ENCODE measurements at regions of chr15 and their contacts with region 1.

Region 1: DNA sequence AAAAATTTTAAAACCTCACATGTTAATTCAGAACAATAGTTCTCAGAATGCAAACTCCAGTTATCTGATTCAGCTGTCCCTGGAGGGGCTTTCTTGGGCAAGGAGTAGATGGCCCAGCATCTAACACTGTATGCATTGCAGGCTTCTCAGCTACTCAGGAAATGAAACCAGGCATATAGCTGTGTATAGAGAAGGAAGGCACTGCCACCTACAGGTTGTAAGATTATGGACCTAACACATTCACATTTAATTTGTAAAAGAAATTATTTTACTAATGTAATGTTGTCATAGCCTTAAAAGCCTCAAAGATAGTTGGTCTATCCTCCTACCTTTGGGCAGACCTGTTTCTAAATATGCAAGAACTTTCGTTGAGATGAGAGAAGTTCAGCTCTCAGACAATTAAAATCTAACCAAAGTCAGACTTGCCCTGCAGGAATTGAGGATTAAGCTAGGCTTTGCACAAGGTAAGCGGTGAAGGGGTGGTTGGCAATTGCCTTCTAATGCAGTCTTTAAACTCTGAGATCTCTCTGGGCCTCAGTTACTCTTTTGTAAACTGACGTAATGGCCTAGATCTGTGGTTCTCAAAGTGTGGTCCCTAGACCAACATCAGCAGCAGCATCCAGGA is 132.8 kb upstream of the SLC24A5 start:
- DNase-seq: peak in 2 of 9 donors; percentile 2 to 10
- ATAC-seq: peak; percentile 70
- H3K4me3 ChIP-seq: no peak overlapping the region
- H3K4me3 Mint-ChIP-seq: no peak overlapping the region
- H3K27ac ChIP-seq: no peak overlapping the region
- H3K27ac Mint-ChIP-seq: no peak overlapping the region
- H3K4me1 ChIP-seq: no peaks in the 10 kb centered on the region
- H3K4me1 Mint-ChIP-seq: no peaks in the 10 kb centered on the region
- H3K27me3 ChIP-seq: no peaks in the 10 kb centered on the region
- H3K27me3 Mint-ChIP-seq: peaks cover 2 to 14% (median 6%) of the 10 kb centered on the region in 5 donors

Region 2: DNA sequence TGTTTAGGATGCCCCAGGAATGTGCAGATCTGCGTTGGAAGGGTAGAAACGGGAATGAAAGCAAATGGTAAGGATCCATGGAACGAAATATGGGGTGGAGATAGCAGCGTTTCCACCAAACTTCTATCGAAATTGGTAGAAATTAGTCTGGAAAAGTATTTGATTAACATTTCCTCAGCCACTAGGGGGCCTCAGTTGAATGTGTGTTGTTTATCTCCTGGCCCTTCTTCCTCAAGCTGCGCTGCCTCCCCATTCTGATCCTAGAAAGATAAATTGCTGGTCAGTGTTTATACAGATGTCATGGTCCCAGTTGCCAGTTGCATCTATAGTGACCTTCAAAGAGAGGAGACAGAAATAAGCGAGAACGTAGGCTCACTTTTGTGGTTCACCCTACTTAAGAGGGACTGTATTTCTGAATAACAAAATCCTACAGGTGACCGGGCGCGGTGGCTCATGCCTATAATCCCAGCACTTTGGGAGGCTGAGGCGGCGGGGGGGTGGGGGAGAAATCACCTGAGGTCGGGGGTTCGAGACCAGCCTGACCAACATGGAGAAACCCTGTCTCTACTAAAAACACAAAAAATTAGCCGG is 1896.1 kb before region 1 on chr15:
- CTCF ChIA-PET with region 1: no interaction called
- POLR2A ChIA-PET with region 1: no interaction called
- intact Hi-C with region 1: loop called in 1 of 2 experiments (anchors 10 kb)
- DNase-seq: no peak
- ATAC-seq: no peak
- H3K4me3 ChIP-seq: no peak overlapping the region
- H3K4me3 Mint-ChIP-seq: no peak overlapping the region
- H3K27ac ChIP-seq: no peak overlapping the region
- H3K27ac Mint-ChIP-seq: no peak overlapping the region
- H3K4me1 ChIP-seq: no peaks in the 10 kb centered on the region
- H3K4me1 Mint-ChIP-seq: peaks cover 0 to 1% (median 0%) of the 10 kb centered on the region in 7 donors
- H3K27me3 ChIP-seq: no peaks in the 10 kb centered on the region
- H3K27me3 Mint-ChIP-seq: peaks cover 0 to 11% (median 0%) of the 10 kb centered on the region in 5 donors

Region 3: DNA sequence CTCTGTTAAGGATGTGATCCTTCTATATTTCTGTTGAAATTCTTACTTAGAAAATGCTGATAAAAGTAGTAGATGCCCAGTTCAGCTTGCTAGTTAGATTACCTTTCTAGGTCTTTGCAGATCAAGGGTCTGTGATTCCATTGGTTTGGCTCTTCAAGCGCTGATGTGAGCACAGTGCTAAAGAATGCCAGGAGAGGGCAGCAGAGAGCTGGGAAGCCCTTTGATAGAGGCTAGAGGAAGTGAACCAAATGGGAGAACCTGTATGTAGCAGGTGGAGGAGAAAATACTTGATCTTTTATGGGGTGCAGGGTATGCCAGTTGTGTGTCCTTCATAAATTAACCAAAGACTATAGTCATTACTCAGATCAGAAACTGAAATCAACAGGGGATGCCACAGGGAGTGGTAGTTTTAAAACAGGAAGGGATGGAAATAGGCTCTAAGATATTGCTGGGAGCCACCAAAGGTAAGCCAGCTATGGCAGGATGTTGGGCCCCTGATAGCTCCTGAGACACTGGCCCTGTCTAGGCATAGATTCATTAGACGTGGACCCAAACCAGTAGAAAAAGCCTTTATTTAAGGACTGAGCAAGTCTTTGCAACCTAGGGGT is 1675.8 kb before region 1 on chr15:
- CTCF ChIA-PET with region 1: no interaction called
- POLR2A ChIA-PET with region 1: no interaction called
- intact Hi-C with region 1: loop called in 1 of 2 experiments (anchors 1 kb)
- DNase-seq: peak in 7 of 9 donors; percentile 2 to 48 (median 39)
- ATAC-seq: peak; percentile 67
- H3K4me3 ChIP-seq: no peak overlapping the region
- H3K4me3 Mint-ChIP-seq: no peak overlapping the region
- H3K27ac ChIP-seq: no peak overlapping the region
- H3K27ac Mint-ChIP-seq: no peak overlapping the region
- H3K4me1 ChIP-seq: no peaks in the 10 kb centered on the region
- H3K4me1 Mint-ChIP-seq: no peaks in the 10 kb centered on the region
- H3K27me3 ChIP-seq: no peaks in the 10 kb centered on the region
- H3K27me3 Mint-ChIP-seq: peaks cover 0 to 6% (median 0%) of the 10 kb centered on the region in 5 donors

Region 4: DNA sequence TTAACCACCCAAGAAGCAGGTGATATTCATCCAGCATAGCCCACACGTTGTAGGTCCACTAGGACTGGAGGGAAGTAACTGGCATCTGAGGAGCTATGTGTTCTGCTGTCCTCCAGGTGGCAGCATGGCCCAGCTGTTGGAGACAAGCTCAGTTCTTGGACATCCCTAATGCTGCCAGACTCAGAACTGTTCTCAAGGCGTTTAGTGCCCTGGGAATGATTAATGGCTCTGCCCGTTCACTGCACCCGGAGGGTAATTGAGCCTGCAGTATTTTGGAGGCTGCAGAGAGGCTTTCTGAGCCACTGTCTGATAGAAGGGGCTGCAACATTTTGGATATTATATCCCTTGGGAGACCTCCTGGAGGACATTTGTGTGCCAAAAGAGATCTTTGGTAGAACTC is 792.0 kb before region 1 on chr15:
- CTCF ChIA-PET with region 1: interaction called, 3 read pairs
- POLR2A ChIA-PET with region 1: no interaction called
- intact Hi-C with region 1: loop called (anchors 1 kb)
- DNase-seq: peak in 7 of 9 donors; percentile 9 to 34 (median 19)
- ATAC-seq: peak; percentile 57
- H3K4me3 ChIP-seq: no peak overlapping the region
- H3K4me3 Mint-ChIP-seq: no peak overlapping the region
- H3K27ac ChIP-seq: no peak overlapping the region
- H3K27ac Mint-ChIP-seq: no peak overlapping the region
- H3K4me1 ChIP-seq: no peaks in the 10 kb centered on the region
- H3K4me1 Mint-ChIP-seq: no peaks in the 10 kb centered on the region
- H3K27me3 ChIP-seq: no peaks in the 10 kb centered on the region
- H3K27me3 Mint-ChIP-seq: peaks cover 2 to 31% (median 8%) of the 10 kb centered on the region in 5 donors

Region 5: DNA sequence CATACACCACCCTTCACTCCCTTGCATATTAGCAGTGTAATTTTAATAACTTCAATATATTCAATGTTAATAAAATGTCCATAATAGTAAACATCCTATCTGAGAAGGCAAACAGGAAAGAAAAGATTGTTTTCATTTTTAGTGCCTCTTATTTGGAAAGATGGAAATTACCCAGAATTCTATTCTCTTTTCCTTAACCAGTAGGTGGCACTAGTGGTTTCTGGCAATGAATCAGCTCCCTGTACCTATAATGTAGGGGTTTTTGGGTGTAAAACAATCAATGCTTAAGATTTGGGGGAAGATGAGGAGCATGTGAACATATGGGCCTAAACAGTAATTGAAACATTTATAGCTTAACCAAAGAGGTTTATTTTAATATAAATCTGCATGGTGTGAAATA is 276.4 kb before region 1 on chr15:
- CTCF ChIA-PET with region 1: no interaction called
- POLR2A ChIA-PET with region 1: no interaction called
- intact Hi-C with region 1: loop called in 1 of 2 experiments (anchors 5 kb)
- DNase-seq: no peak
- ATAC-seq: no peak
- H3K4me3 ChIP-seq: no peak overlapping the region
- H3K4me3 Mint-ChIP-seq: no peak overlapping the region
- H3K27ac ChIP-seq: no peak overlapping the region
- H3K27ac Mint-ChIP-seq: no peak overlapping the region
- H3K4me1 ChIP-seq: no peaks in the 10 kb centered on the region
- H3K4me1 Mint-ChIP-seq: no peaks in the 10 kb centered on the region
- H3K27me3 ChIP-seq: peaks cover 0 to 3% of the 10 kb centered on the region in 2 donors
- H3K27me3 Mint-ChIP-seq: peaks cover 21 to 42% (median 34%) of the 10 kb centered on the region in 5 donors

Measured in naive thymus-derived CD4-positive, alpha-beta T cell (primary cell).